ENCODE measurements at regions of chr10 and their contacts with region 1.

Region 1: GRCh38 chr10:97498076-97498840 is at the start of gene MMS19:
- DNase-seq: peak; percentile 99
- H3K4me3 Mint-ChIP-seq: peak within 1 kb of the TSS; percentile 87
- H3K27ac Mint-ChIP-seq: peak within 1 kb of the TSS; percentile 94
- H3K4me1 Mint-ChIP-seq: peaks cover 41% of the 10 kb centered on the region
- H3K27me3 Mint-ChIP-seq: peaks cover 21% of the 10 kb centered on the region
- total RNA-seq, gene MMS19: 95.0 to 95.6 TPM

Region 2: GRCh38 chr10:97334370-97335175 is 163.7 kb before region 1 on chr10 and contains the start of gene FRAT2:
- CTCF ChIA-PET with region 1: no interaction called
- intact Hi-C with region 1: loop called (anchors 1 kb)
- DNase-seq: peak; percentile 87
- H3K4me3 Mint-ChIP-seq: peak within 1 kb of the TSS; percentile 75
- H3K27ac Mint-ChIP-seq: peak within 1 kb of the TSS; percentile 86
- H3K4me1 Mint-ChIP-seq: peaks cover 32% of the 10 kb centered on the region
- H3K27me3 Mint-ChIP-seq: no peaks in the 10 kb centered on the region
- total RNA-seq, gene FRAT2: 5.1 to 5.6 TPM

Region 3: DNA sequence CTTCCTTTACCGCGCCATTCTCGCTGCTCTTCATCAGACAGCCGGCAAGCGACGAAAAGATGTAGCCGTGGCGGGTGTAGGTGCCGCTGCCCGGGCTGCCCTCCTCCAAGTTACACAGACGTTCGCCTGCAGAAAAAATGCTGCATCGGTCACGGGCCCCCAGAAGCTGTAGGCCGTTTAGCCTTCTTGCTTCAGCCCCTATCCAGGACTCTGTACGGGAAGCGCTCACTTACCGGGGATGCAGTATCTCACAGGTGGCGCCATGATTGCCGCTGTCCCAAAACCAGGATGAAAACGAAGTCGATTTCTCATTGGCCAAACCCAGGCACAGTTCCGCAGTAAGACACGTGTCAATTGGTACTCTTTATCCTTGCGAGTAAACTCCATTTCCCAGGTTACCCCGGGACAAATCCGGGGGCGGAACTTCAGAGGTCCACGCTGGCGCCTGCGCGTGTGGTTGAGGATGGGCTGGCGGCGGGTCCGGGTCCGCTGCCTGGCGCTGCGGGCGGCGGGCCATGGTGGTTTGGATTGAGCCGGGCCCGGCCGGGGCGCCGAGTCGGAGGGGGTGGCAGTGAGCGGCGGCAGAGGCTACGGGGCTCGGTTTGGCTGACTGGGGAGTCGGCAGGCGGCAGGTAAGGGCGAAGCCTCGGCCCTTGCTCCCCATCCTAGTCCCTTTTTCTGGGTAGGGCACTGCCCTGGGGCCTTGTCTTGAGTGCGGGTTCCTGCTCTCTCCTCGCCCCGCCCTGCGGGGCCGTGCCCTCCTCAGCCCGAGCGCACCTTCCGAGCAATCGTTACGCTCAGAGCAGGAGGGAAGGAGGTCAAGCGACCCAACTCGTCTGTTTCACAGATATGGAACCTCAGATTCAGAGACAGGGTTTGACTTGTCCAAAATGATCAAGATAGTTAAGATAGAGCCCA is 52.3 kb before region 1 on chr10 and contains the starts of genes EXOSC1 and ZDHHC16:
- CTCF ChIA-PET with region 1: no interaction called
- intact Hi-C with region 1: loop called (anchors 1 kb)
- DNase-seq: peak; percentile 95
- H3K4me3 Mint-ChIP-seq: peak within 1 kb of the TSS; percentile 86
- H3K27ac Mint-ChIP-seq: peak within 1 kb of the TSS; percentile 80
- H3K4me1 Mint-ChIP-seq: peaks cover 53% of the 10 kb centered on the region
- H3K27me3 Mint-ChIP-seq: no peaks in the 10 kb centered on the region
- total RNA-seq, gene EXOSC1: 54.9 to 64.0 TPM
- total RNA-seq, gene ZDHHC16: 20.7 to 26.5 TPM

Region 4: DNA sequence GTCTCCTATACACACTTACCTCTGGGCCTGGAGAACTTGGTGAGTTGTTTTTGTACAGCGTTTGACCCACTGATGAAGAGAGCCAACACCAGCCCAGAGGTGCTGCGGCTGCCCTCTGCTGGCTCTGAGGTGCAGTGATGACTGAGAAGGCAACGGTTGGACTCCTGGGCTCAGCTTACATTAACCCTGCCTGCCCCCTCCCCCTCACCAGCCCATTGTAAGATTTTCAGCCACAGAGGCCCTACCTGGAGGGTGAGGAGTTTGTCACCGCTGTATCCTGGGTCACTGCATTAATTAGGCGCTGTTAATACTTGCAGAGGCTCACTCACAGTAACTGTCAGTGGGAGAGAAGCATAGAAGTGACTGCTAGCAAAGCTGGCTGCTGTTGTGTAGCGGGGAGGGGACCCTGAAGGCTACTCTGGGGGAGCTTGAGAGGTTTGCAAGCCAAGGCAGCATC is 55.3 kb after region 1 on chr10:
- CTCF ChIA-PET with region 1: interaction called, 6 read pairs
- intact Hi-C with region 1: loop called (anchors 1 kb)
- DNase-seq: peak; percentile 78
- H3K4me3 Mint-ChIP-seq: no peak overlapping the region
- H3K27ac Mint-ChIP-seq: no peak overlapping the region
- H3K4me1 Mint-ChIP-seq: peaks cover 2% of the 10 kb centered on the region
- H3K27me3 Mint-ChIP-seq: no peaks in the 10 kb centered on the region

Region 5: GRCh38 chr10:97736902-97737769 is 238.9 kb after region 1 on chr10 and contains the start of gene ZFYVE27:
- CTCF ChIA-PET with region 1: no interaction called
- intact Hi-C with region 1: loop called (anchors 1 kb)
- DNase-seq: peak; percentile 98
- H3K4me3 Mint-ChIP-seq: peak within 1 kb of the TSS; percentile 92
- H3K27ac Mint-ChIP-seq: peak within 1 kb of the TSS; percentile 93
- H3K4me1 Mint-ChIP-seq: peaks cover 44% of the 10 kb centered on the region
- H3K27me3 Mint-ChIP-seq: no peaks in the 10 kb centered on the region
- total RNA-seq, gene ZFYVE27: 18.0 to 18.4 TPM